HEK293T (cell line): ENCODE measurements at regions of chr7 and their contacts with region 1.

Region 1: GRCh38 chr7:127598318-127598717 is 4.8 kb downstream of the FSCN3 start:
- DNase-seq: peak; percentile 38

Region 2: GRCh38 chr7:127588019-127588696 is 10.2 kb before region 1 on chr7 and contains the start of gene ARF5:
- CTCF ChIA-PET with region 1: no interaction called
- POLR2A ChIA-PET with region 1: interaction called, 10 read pairs
- DNase-seq: peak; percentile 92

Region 3: DNA sequence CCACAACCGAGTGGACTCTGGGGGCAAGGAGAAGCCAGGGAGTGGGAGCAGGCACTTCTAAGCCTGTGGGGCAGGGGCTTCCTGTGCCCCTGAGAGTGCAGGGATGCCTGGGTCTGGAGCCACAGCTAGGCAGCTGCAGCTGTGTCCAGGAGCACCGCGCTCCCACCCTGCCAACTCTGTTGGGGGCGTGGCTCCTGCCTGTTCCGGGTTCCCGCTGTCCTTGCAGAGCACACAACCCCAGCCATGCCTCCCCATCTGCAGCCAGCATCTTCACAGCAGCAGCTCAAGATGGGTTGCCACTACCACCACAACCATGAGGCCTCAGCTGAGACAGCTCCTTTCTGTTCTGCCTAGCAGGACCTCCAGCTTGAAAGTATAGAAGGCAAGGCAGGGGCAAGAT is 11.0 kb after region 1 on chr7:
- CTCF ChIA-PET with region 1: no interaction called
- POLR2A ChIA-PET with region 1: no interaction called
- DNase-seq: no peak

Region 4: DNA sequence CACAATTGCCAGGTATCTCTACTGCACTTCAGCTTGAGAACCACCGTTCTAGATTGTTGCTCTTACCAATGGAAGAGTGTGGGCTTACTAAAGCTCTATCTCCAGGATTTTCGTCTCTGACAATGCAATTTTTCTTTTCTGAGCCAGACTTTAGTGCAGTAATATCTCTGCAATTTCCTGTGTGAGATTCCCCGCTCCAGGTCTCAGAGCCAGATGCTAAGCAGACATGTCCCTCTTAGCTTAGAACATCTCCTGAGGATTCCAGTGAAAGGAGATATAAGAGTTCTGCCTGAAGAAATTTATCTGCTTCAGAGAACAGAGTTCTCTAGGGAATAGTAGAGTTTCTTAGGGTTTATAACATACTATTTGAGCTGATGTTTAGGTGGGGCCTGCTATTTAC is 135.7 kb after region 1 on chr7:
- CTCF ChIA-PET with region 1: no interaction called
- POLR2A ChIA-PET with region 1: no interaction called
- DNase-seq: no peak